Prostate gland (tissue), 2 donors: ENCODE measurements at regions of chr22 and their contacts with region 1.

Region 1: GRCh38 chr22:38353142-38353629 is 36.0 kb upstream of the CSNK1E start:
- DNase-seq: peak; percentile 40
- H3K4me3 ChIP-seq: no peak overlapping the region
- H3K27ac ChIP-seq: no peak overlapping the region
- H3K4me1 ChIP-seq: no peaks in the 10 kb centered on the region
- H3K27me3 ChIP-seq: no peaks in the 10 kb centered on the region
- CTCF ChIP-seq: peak; percentile 91 to 98 (median 96)
- POLR2A ChIP-seq: no peak

Region 2: GRCh38 chr22:38051900-38052862 is 301.0 kb before region 1 on chr22:
- intact Hi-C with region 1: loop called (anchors 5 kb)
- DNase-seq: peak; percentile 79
- H3K4me3 ChIP-seq: no peak overlapping the region
- H3K27ac ChIP-seq: no peak overlapping the region
- H3K4me1 ChIP-seq: no peaks in the 10 kb centered on the region
- H3K27me3 ChIP-seq: no peaks in the 10 kb centered on the region
- CTCF ChIP-seq: peak; percentile 76 to 96 (median 88)
- POLR2A ChIP-seq: no peak

Region 3: GRCh38 chr22:38114484-38115398 is 238.4 kb before region 1 on chr22:
- intact Hi-C with region 1: loop called (anchors 2 kb)
- DNase-seq: peak; percentile 82
- H3K4me3 ChIP-seq: no peak overlapping the region
- H3K27ac ChIP-seq: no peak overlapping the region
- H3K4me1 ChIP-seq: no peaks in the 10 kb centered on the region
- H3K27me3 ChIP-seq: no peaks in the 10 kb centered on the region
- CTCF ChIP-seq: peak; percentile 72 to 92 (median 90)
- POLR2A ChIP-seq: no peak

Region 4: GRCh38 chr22:38262051-38262795 is 91.0 kb before region 1 on chr22:
- intact Hi-C with region 1: loop called (anchors 5 kb)
- DNase-seq: peak; percentile 67
- H3K4me3 ChIP-seq: no peak overlapping the region
- H3K27ac ChIP-seq: peak overlapping the region; percentile 32 to 52
- H3K4me1 ChIP-seq: peaks cover under 1% of the 10 kb centered on the region
- H3K27me3 ChIP-seq: no peaks in the 10 kb centered on the region
- CTCF ChIP-seq: peak in 3 of 4 experiments; percentile 36 to 63 (median 61)
- POLR2A ChIP-seq: no peak